ENCODE measurements at regions of chr6 and their contacts with region 1.

Region 1: GRCh38 chr6:138161338-138162110 is at the start of gene ARFGEF3:
- DNase-seq: peak; percentile 42
- H3K4me3 ChIP-seq: peak within 1 kb of the TSS; percentile 66 to 85 (median 80)
- H3K27ac ChIP-seq: peak within 1 kb of the TSS; percentile 38
- H3K4me1 ChIP-seq: peaks cover 10% of the 10 kb centered on the region
- H3K27me3 ChIP-seq: no peaks in the 10 kb centered on the region
- CTCF ChIP-seq: no peak
- POLR2A ChIP-seq: no peak
- total RNA-seq, gene ARFGEF3: 7.0 and 7.3 TPM in 2 replicates

Region 2: DNA sequence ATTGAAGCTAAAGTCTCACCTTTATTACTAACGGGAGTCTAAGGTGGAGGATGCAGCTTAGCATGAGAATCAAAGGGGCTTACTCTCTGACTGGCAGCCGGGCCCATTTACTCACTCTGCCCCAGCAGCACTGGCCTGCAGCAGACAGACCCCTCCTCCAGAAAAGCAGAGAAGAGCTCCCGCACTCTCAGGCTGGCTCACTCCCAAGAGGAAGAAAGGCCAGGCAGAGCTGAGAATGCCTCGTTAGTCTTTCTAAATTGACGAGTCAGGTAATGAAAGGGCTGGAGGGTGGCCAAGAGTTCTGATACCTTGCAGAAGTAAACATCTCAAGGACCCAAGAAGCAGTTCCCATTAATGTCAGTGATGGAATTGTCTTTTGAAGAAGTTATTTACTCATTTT is 1072.2 kb before region 1 on chr6:
- CTCF ChIA-PET with region 1: no interaction called
- POLR2A ChIA-PET with region 1: no interaction called
- dilution Hi-C with region 1: no loop called
- intact Hi-C with region 1: loop called (anchors 5 kb)
- DNase-seq: no peak
- H3K4me3 ChIP-seq: no peak overlapping the region
- H3K27ac ChIP-seq: no peak overlapping the region
- H3K4me1 ChIP-seq: no peaks in the 10 kb centered on the region
- H3K27me3 ChIP-seq: no peaks in the 10 kb centered on the region
- CTCF ChIP-seq: no peak
- POLR2A ChIP-seq: no peak

Region 3: DNA sequence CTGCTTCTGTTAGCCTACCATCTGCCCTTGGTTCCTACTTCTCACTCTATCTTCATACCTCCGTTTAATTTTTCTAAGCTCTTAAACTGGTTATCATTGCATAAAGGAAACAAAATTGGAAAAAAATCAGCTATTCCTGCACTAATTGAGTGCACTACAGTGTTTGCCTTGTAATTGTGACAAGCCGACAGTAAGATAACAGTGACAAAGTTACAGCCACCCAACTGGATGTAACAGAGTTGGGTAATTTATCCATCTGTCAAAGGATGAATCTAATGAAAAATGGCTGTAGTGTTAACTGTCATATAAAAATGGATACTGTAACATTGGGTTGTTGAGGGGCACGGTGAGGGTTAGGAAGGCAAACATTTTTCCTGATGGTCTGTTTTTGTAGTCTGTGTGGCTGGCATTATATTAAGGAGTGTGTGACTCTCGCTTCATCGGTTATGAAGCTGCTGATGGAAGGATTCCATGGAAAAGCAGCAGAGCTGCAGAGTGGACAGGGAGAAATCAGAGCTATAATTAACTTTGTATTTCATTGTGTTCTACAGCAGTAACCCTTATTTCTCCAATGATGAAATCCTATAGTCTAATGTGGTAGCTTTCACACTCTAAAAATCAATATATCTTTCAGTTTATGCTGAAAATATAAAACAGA is 44.0 kb after region 1 on chr6:
- CTCF ChIA-PET with region 1: interaction called, 4 read pairs
- POLR2A ChIA-PET with region 1: no interaction called
- dilution Hi-C with region 1: no loop called
- intact Hi-C with region 1: loop called (anchors 1 kb)
- DNase-seq: no peak
- H3K4me3 ChIP-seq: no peak overlapping the region
- H3K27ac ChIP-seq: no peak overlapping the region
- H3K4me1 ChIP-seq: no peaks in the 10 kb centered on the region
- H3K27me3 ChIP-seq: no peaks in the 10 kb centered on the region
- CTCF ChIP-seq: no peak
- POLR2A ChIP-seq: no peak

Region 4: GRCh38 chr6:138287144-138287955 is 125.8 kb after region 1 on chr6:
- CTCF ChIA-PET with region 1: no interaction called
- POLR2A ChIA-PET with region 1: no interaction called
- dilution Hi-C with region 1: no loop called
- intact Hi-C with region 1: loop called (anchors 2 kb)
- DNase-seq: peak; percentile 29
- H3K4me3 ChIP-seq: no peak overlapping the region
- H3K27ac ChIP-seq: no peak overlapping the region
- H3K4me1 ChIP-seq: peaks cover 3% of the 10 kb centered on the region
- H3K27me3 ChIP-seq: no peaks in the 10 kb centered on the region
- CTCF ChIP-seq: peak; percentile 43 to 67
- POLR2A ChIP-seq: no peak

Region 5: GRCh38 chr6:138334000-138334399 is 172.5 kb after region 1 on chr6:
- CTCF ChIA-PET with region 1: no interaction called
- POLR2A ChIA-PET with region 1: no interaction called
- dilution Hi-C with region 1: no loop called
- intact Hi-C with region 1: no loop called
- DNase-seq: no peak
- H3K4me3 ChIP-seq: no peak overlapping the region
- H3K27ac ChIP-seq: no peak overlapping the region
- H3K4me1 ChIP-seq: no peaks in the 10 kb centered on the region
- H3K27me3 ChIP-seq: no peaks in the 10 kb centered on the region
- CTCF ChIP-seq: no peak
- POLR2A ChIP-seq: no peak